Activated CD8-positive, alpha-beta T cell treated with anti-CD3 and anti-CD28 coated beads for 36 hours (primary cell): ENCODE measurements at regions of chr3 and their contacts with region 1.

Region 1: GRCh38 chr3:88149509-88150362 is at the start of gene C3orf38:
- DNase-seq: peak; percentile 81
- ATAC-seq: peak; percentile 88
- H3K4me3 Mint-ChIP-seq: peak within 1 kb of the TSS; percentile 94
- H3K27ac Mint-ChIP-seq: peak within 1 kb of the TSS; percentile 99
- H3K4me1 Mint-ChIP-seq: peaks cover 32% of the 10 kb centered on the region
- H3K27me3 Mint-ChIP-seq: peaks cover 1% of the 10 kb centered on the region
- CTCF ChIP-seq: no peak
- total RNA-seq, gene C3orf38: 17.8 to 19.0 TPM

Region 2: GRCh38 chr3:88058591-88059368 is 91.0 kb before region 1 on chr3 and contains the starts of genes CGGBP1 and ZNF654:
- CTCF ChIA-PET with region 1: no interaction called
- POLR2A ChIA-PET with region 1: interaction called, 10 read pairs
- intact Hi-C with region 1: loop called (anchors 5 kb)
- DNase-seq: peak; percentile 99
- ATAC-seq: peak; percentile 95
- H3K4me3 Mint-ChIP-seq: peak within 1 kb of the TSS; percentile 98
- H3K27ac Mint-ChIP-seq: peak within 1 kb of the TSS; percentile 97
- H3K4me1 Mint-ChIP-seq: peaks cover 50% of the 10 kb centered on the region
- H3K27me3 Mint-ChIP-seq: no peaks in the 10 kb centered on the region
- CTCF ChIP-seq: no peak
- total RNA-seq, gene CGGBP1: 69.2 to 74.6 TPM
- total RNA-seq, gene ZNF654: 20.2 to 21.0 TPM

Region 3: DNA sequence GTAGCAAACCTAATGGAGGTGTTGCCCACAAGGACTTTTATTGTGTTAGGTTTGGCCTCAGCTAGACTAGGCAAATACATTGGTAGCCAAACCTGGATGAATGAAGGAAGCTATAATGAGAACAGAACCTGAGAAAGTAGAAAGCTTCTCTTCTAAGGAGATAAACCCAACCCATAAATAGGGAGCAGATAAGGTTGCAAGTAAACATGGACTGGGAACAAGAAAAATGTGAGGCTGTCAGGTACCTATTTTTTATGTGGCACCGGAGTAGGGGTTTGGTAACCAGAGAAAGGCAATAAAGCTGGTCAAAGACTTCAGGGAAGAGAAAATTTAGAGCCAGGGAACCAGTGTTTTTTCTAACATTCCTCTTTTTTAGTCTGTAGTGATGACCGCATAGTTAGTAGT is 65.6 kb before region 1 on chr3:
- CTCF ChIA-PET with region 1: no interaction called
- POLR2A ChIA-PET with region 1: no interaction called
- intact Hi-C with region 1: no loop called
- DNase-seq: no peak
- ATAC-seq: no peak
- H3K4me3 Mint-ChIP-seq: no peak overlapping the region
- H3K27ac Mint-ChIP-seq: no peak overlapping the region
- H3K4me1 Mint-ChIP-seq: peaks cover 23% of the 10 kb centered on the region
- H3K27me3 Mint-ChIP-seq: no peaks in the 10 kb centered on the region
- CTCF ChIP-seq: no peak

Region 4: DNA sequence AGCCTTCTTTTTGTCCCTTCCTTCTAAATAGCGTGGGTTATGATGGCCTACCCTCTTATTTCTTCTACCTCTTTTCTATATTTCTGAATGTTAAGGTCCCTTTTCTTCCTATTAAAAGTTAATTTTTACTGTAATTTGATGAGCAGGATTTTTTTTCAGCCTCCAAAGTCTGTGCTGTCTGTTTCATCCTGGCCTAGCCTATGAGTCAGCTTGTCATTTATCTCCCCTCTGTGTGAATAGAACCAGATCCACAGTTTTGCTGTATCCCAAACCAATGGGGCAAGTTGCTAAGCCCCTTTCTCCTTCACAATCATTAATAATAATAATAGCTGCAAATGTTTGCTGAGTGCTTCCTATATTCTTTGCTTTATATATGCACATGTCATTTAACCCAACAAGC is 18.0 kb before region 1 on chr3:
- CTCF ChIA-PET with region 1: interaction called, 12 read pairs
- POLR2A ChIA-PET with region 1: interaction called, 11 read pairs
- intact Hi-C with region 1: no loop called
- DNase-seq: no peak
- ATAC-seq: no peak
- H3K4me3 Mint-ChIP-seq: no peak overlapping the region
- H3K27ac Mint-ChIP-seq: no peak overlapping the region
- H3K4me1 Mint-ChIP-seq: peaks cover 14% of the 10 kb centered on the region
- H3K27me3 Mint-ChIP-seq: no peaks in the 10 kb centered on the region
- CTCF ChIP-seq: no peak

Region 5: DNA sequence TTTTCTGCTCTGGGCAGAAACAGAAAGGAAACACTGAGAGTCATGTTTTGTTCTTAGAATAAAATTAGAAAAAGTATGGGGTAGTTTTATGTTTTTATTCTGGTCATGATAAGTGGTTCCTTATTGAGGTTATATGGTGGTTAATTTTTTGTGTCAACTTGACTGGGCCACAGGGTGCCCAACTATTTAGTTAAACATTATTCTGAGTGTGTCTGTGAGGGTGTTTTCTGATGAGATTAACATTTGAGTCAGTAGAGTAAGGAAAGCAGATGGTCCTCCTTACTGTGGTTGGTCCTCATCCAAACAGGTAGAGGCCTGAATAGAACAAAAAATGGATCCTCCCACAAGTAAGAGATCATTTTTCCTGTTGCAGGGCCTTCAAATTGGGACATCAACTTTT is 98.9 kb after region 1 on chr3:
- CTCF ChIA-PET with region 1: no interaction called
- POLR2A ChIA-PET with region 1: no interaction called
- intact Hi-C with region 1: no loop called
- DNase-seq: no peak
- ATAC-seq: no peak
- H3K4me3 Mint-ChIP-seq: no peak overlapping the region
- H3K27ac Mint-ChIP-seq: no peak overlapping the region
- H3K4me1 Mint-ChIP-seq: no peaks in the 10 kb centered on the region
- H3K27me3 Mint-ChIP-seq: peaks cover 3% of the 10 kb centered on the region
- CTCF ChIP-seq: no peak

Region 6: GRCh38 chr3:88282528-88283241 is 132.9 kb after region 1 on chr3:
- CTCF ChIA-PET with region 1: no interaction called
- POLR2A ChIA-PET with region 1: no interaction called
- intact Hi-C with region 1: no loop called
- DNase-seq: no peak
- ATAC-seq: no peak
- H3K4me3 Mint-ChIP-seq: no peak overlapping the region
- H3K27ac Mint-ChIP-seq: no peak overlapping the region
- H3K4me1 Mint-ChIP-seq: no peaks in the 10 kb centered on the region
- H3K27me3 Mint-ChIP-seq: no peaks in the 10 kb centered on the region
- CTCF ChIP-seq: no peak